CD4-positive, alpha-beta memory T cell (primary cell): ENCODE measurements at regions of chr18 and their contacts with region 1.

Region 1: DNA sequence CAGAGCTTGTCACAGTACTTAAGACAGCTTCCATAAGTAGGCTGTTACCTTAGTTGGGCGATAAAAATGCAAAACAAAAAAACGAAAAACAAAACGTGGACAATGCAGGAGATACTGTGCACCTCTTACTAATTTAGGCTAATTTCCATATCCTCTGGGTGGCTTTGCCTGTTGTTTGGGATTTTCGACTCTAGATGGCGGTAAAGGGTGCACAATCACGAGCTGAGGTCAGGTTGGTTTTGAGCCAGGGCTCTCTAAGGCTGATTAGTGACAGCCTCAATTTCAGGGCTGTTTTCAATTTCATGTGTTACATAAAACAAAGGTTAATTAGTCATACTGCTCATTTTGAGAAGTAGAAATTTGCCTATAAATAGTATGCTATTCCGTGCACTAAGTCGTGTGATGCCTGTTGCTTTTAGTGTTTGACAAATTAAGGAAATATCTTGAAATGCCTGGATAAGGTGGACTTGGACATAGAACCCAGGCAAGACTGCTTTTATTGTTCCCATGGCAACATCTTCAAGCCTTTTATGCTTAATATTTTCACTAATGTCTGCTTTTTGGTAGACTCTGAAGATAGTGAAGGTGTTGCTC is 493.1 kb downstream of the SOCS6 start:
- DNase-seq: peak; percentile 53 to 65 (median 59)
- H3K4me3 ChIP-seq: no peak overlapping the region
- H3K4me3 Mint-ChIP-seq: no peak overlapping the region
- H3K27ac ChIP-seq: no peak overlapping the region
- H3K27ac Mint-ChIP-seq: peak overlapping the region in 2 of 7 donors; percentile 70 to 82
- H3K4me1 ChIP-seq: peaks cover 7% of the 10 kb centered on the region
- H3K4me1 Mint-ChIP-seq: peaks cover 0 to 6% (median 3%) of the 10 kb centered on the region in 4 donors
- H3K27me3 ChIP-seq: no peaks in the 10 kb centered on the region
- H3K27me3 Mint-ChIP-seq: no peaks in the 10 kb centered on the region

Region 2: DNA sequence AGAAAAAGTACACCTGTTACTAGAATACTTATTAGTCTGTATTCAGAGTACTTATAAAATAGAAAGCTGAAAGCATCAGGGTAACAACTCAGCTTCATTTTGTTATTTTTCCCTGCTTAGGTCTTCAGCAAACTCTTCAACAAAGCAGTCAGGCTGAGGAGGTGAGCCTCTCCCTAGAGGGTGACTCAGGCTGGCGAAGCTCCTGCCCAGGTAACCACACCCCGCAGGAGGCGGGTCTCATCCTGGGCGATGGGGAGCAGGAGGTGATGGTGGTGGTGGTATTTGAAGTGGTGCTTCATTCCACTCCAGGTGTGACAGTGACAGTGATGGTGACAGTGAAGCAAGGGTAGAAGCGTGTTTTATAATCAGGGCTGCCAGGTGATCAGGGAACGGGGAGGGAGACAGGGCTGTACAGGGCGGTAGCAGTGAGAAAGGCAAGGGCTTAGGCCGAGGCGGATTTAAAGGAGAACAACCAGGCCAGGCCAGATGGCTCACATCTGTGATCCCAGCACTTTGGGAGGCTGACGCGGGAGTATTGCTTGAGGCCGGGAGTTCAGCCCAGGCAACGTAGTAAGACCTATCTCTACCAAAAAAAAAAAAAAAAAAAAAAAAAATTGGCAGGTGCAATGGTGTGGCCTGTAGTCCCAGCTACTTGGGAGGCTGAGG is 366.0 kb before region 1 on chr18:
- CTCF ChIA-PET with region 1: no interaction called
- POLR2A ChIA-PET with region 1: no interaction called
- intact Hi-C with region 1: no loop called
- DNase-seq: no peak
- H3K4me3 ChIP-seq: no peak overlapping the region
- H3K4me3 Mint-ChIP-seq: no peak overlapping the region
- H3K27ac ChIP-seq: no peak overlapping the region
- H3K27ac Mint-ChIP-seq: no peak overlapping the region
- H3K4me1 ChIP-seq: no peaks in the 10 kb centered on the region
- H3K4me1 Mint-ChIP-seq: no peaks in the 10 kb centered on the region
- H3K27me3 ChIP-seq: peaks cover 3% of the 10 kb centered on the region
- H3K27me3 Mint-ChIP-seq: peaks cover 1 to 2% of the 10 kb centered on the region in 2 donors

Region 3: DNA sequence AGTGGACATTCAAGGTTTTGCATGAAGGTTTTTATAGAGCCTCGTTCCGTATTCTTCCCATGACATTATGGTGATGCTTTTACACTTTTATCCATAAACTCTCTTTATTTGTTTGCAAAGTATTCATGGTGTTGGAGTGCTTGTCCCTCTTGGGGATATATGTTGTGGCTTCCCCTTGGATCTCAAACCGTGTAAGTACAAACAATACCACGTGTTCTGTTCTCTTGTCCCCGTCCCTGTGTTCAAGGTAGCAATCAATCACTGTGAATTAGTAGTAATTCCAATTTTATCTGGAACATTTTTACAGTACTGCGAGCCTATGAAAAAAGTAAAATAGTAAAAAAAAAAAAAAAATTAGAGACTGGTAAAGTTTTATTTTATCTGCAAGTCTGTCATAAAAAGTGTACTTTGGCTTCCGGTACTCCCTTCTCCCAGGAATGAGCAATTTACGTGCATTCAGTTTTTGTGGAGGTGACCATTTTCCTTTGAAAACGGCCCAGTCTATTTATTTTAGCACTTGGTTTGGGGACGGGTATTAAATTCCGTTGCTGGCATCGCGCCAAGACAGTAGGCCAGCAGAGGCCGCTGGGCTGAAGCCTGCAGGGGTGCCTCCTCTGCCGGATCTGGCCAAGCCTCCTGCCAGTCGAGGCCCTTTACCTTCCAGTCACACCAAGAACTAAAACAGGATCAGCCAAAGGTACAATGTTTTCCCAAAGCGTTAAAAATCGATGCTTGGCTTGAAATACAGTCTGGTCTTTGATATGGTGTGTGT is 317.4 kb before region 1 on chr18:
- CTCF ChIA-PET with region 1: no interaction called
- POLR2A ChIA-PET with region 1: no interaction called
- intact Hi-C with region 1: no loop called
- DNase-seq: peak in 4 of 5 donors; percentile 1 to 20 (median 5)
- H3K4me3 ChIP-seq: no peak overlapping the region
- H3K4me3 Mint-ChIP-seq: peak overlapping the region in 7 of 8 donors; percentile 32 to 82 (median 71)
- H3K27ac ChIP-seq: no peak overlapping the region
- H3K27ac Mint-ChIP-seq: peak overlapping the region in 1 of 7 donors; percentile 30
- H3K4me1 ChIP-seq: peaks cover 5% of the 10 kb centered on the region
- H3K4me1 Mint-ChIP-seq: peaks cover 0 to 7% (median 5%) of the 10 kb centered on the region in 4 donors
- H3K27me3 ChIP-seq: peaks cover 3% of the 10 kb centered on the region
- H3K27me3 Mint-ChIP-seq: peaks cover 16 to 18% of the 10 kb centered on the region in 2 donors

Region 4: DNA sequence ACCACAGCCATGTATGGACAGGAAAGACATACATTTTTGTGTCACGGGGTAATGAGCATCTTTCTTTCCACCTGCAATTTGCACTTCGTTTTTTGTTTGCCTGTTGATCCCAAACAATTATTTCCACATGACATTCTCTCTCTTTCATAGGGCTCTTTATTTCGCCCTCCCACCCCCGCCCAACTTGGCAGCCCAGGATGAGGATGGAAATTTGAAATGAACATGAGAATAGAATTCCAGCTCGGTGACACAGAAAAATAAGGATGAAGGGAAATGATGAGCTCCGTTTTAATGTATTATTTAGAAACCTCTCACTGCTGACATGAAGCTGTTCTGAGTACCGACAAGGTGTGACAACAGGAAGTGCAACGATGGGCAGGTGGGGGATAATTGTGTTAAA is 49.8 kb before region 1 on chr18:
- CTCF ChIA-PET with region 1: no interaction called
- POLR2A ChIA-PET with region 1: no interaction called
- intact Hi-C with region 1: no loop called
- DNase-seq: no peak
- H3K4me3 ChIP-seq: no peak overlapping the region
- H3K4me3 Mint-ChIP-seq: no peak overlapping the region
- H3K27ac ChIP-seq: no peak overlapping the region
- H3K27ac Mint-ChIP-seq: no peak overlapping the region
- H3K4me1 ChIP-seq: no peaks in the 10 kb centered on the region
- H3K4me1 Mint-ChIP-seq: peaks cover 0 to 4% (median 0%) of the 10 kb centered on the region in 4 donors
- H3K27me3 ChIP-seq: no peaks in the 10 kb centered on the region
- H3K27me3 Mint-ChIP-seq: no peaks in the 10 kb centered on the region

Region 5: GRCh38 chr18:70931942-70932814 is 150.2 kb after region 1 on chr18:
- CTCF ChIA-PET with region 1: no interaction called
- POLR2A ChIA-PET with region 1: no interaction called
- intact Hi-C with region 1: loop called (anchors 5 kb)
- DNase-seq: peak in 2 of 5 donors; percentile 3 to 9
- H3K4me3 ChIP-seq: no peak overlapping the region
- H3K4me3 Mint-ChIP-seq: no peak overlapping the region
- H3K27ac ChIP-seq: no peak overlapping the region
- H3K27ac Mint-ChIP-seq: peak overlapping the region in 1 of 7 donors; percentile 53
- H3K4me1 ChIP-seq: no peaks in the 10 kb centered on the region
- H3K4me1 Mint-ChIP-seq: peaks cover 0 to 2% (median 0%) of the 10 kb centered on the region in 4 donors
- H3K27me3 ChIP-seq: no peaks in the 10 kb centered on the region
- H3K27me3 Mint-ChIP-seq: no peaks in the 10 kb centered on the region

Region 6: DNA sequence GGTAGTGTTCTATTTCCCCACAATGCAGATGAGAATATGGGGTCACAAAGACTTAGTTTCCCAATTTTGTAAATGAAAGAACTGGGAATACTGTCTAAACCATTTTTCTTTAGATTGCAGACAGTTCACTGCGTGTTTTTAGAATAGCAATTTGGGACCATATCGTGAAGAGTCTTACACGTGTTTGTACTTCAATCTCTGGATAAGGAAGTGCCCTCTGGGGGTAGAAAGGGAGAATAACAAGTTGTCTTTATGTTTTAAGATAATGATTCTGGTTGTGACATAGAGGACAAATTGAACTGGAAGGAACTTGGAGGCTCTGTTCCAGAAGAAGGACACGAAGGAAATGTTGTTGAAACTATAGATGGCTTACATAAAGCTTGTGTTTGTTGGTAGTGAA is 1304.5 kb after region 1 on chr18:
- CTCF ChIA-PET with region 1: no interaction called
- POLR2A ChIA-PET with region 1: no interaction called
- intact Hi-C with region 1: loop called (anchors 5 kb)
- DNase-seq: peak in 1 of 5 donors; percentile 1
- H3K4me3 ChIP-seq: no peak overlapping the region
- H3K4me3 Mint-ChIP-seq: no peak overlapping the region
- H3K27ac ChIP-seq: no peak overlapping the region
- H3K27ac Mint-ChIP-seq: no peak overlapping the region
- H3K4me1 ChIP-seq: no peaks in the 10 kb centered on the region
- H3K4me1 Mint-ChIP-seq: peaks cover 0 to 1% (median 0%) of the 10 kb centered on the region in 4 donors
- H3K27me3 ChIP-seq: no peaks in the 10 kb centered on the region
- H3K27me3 Mint-ChIP-seq: no peaks in the 10 kb centered on the region